OCI-LY7 (cell line): ENCODE measurements at regions of chr4 and their contacts with region 1.

Region 1: GRCh38 chr4:138035781-138036258 is 206.3 kb downstream of the SLC7A11 start:
- DNase-seq: peak; percentile 90
- H3K4me3 ChIP-seq: no peak overlapping the region
- H3K27ac ChIP-seq: no peak overlapping the region
- H3K4me1 ChIP-seq: peaks cover 14% of the 10 kb centered on the region
- CTCF ChIP-seq: peak; percentile 93

Region 2: GRCh38 chr4:138021139-138021830 is 14.5 kb before region 1 on chr4:
- CTCF ChIA-PET with region 1: no interaction called
- POLR2A ChIA-PET with region 1: interaction called, 10 read pairs
- intact Hi-C with region 1: no loop called
- DNase-seq: no peak
- H3K4me3 ChIP-seq: no peak overlapping the region
- H3K27ac ChIP-seq: no peak overlapping the region
- H3K4me1 ChIP-seq: no peaks in the 10 kb centered on the region
- CTCF ChIP-seq: no peak

Region 3: GRCh38 chr4:138078751-138079520 is 43.1 kb after region 1 on chr4:
- CTCF ChIA-PET with region 1: no interaction called
- POLR2A ChIA-PET with region 1: no interaction called
- intact Hi-C with region 1: no loop called
- DNase-seq: no peak
- H3K4me3 ChIP-seq: no peak overlapping the region
- H3K27ac ChIP-seq: no peak overlapping the region
- H3K4me1 ChIP-seq: no peaks in the 10 kb centered on the region
- CTCF ChIP-seq: no peak

Region 4: DNA sequence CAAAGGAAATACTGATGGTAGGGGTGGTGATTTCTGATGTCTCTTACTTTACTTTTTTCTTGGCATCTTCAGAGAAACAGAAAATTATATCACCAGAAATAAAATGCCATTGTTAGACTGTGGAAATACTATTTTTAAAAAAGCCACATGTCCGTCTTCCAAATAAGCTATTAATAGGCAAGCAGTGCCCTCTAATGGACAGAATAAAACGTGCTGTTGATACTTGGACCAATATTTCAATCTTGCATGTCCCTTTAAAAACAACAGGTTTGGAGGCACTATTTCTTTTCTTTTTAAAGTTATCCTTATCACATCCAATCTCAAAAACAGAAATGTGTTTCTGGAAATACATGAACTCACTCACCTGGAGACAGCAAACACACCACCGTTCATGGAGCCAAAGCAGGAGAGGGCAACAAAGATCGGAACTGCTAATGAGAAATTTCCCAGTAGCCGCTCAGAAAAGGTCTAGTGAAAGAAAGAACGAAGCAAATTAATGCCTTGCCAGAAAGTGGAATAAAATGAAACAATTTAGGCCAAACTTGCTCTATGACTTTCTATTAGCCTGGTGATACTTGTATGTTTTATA is 147.1 kb after region 1 on chr4:
- CTCF ChIA-PET with region 1: no interaction called
- POLR2A ChIA-PET with region 1: interaction called, 5 read pairs
- intact Hi-C with region 1: loop called (anchors 1 kb)
- DNase-seq: peak; percentile 60
- H3K4me3 ChIP-seq: no peak overlapping the region
- H3K27ac ChIP-seq: no peak overlapping the region
- H3K4me1 ChIP-seq: peaks cover 6% of the 10 kb centered on the region
- CTCF ChIP-seq: peak; percentile 86

Region 5: GRCh38 chr4:138522366-138522765 is 486.5 kb after region 1 on chr4:
- CTCF ChIA-PET with region 1: no interaction called
- POLR2A ChIA-PET with region 1: interaction called, 4 read pairs
- intact Hi-C with region 1: loop called (anchors 1 kb)
- DNase-seq: peak; percentile 38
- H3K4me3 ChIP-seq: no peak overlapping the region
- H3K27ac ChIP-seq: no peak overlapping the region
- H3K4me1 ChIP-seq: no peaks in the 10 kb centered on the region
- CTCF ChIP-seq: peak; percentile 75

Region 6: GRCh38 chr4:138680989-138681604 is 645.3 kb after region 1 on chr4:
- CTCF ChIA-PET with region 1: no interaction called
- POLR2A ChIA-PET with region 1: interaction called, 3 read pairs
- intact Hi-C with region 1: loop called (anchors 1 kb)
- DNase-seq: peak; percentile 76
- H3K4me3 ChIP-seq: no peak overlapping the region
- H3K27ac ChIP-seq: no peak overlapping the region
- H3K4me1 ChIP-seq: no peaks in the 10 kb centered on the region
- CTCF ChIP-seq: peak; percentile 99